CD4-positive, alpha-beta T cell (primary cell): ENCODE measurements at regions of chr5 and their contacts with region 1.

Region 1: DNA sequence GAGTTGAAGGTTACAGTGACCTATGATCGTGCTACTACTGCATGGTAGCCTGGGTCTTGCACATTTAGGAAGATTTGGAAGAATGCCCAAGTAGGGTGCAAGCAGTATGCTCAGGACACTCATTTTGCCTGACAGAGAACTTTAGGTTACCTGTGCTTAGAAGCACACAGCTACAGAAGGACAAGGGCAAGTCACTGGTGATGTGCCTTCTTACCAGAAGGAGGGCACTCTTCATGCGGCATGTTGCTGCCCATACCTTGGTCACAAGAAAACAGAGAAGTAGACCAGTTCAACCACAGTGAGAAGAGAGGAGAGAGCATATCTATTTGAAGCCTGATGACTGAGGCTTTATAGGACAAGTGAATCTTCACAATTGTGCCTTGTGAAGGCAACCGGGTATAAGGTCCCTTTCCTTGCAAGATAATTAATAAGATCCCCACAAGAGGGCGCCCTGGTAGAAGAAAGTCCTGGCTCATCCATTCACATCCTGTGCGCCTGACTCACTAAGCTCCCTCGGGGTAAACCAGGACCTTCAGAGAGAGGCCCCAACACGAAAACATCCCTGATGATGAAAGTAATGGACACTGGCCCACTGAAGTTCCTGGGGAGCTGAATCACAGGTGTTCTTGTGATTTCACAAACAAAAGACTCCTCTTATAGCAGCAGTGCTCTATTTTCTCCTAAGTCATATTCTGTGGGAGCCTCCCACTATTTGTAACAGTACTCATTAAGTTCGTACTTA is 38.1 kb upstream of the STARD4 start:
- DNase-seq: peak; percentile 37 to 83 (median 57)
- ATAC-seq: peak; percentile 90
- H3K4me3 ChIP-seq: no peak overlapping the region
- H3K4me3 Mint-ChIP-seq: no peak overlapping the region
- H3K27ac ChIP-seq: no peak overlapping the region
- H3K27ac Mint-ChIP-seq: no peak overlapping the region
- H3K4me1 ChIP-seq: peaks cover 9% of the 10 kb centered on the region
- H3K4me1 Mint-ChIP-seq: peaks cover 21% of the 10 kb centered on the region
- H3K27me3 ChIP-seq: no peaks in the 10 kb centered on the region
- H3K27me3 Mint-ChIP-seq: peaks cover 3% of the 10 kb centered on the region
- CTCF ChIP-seq: peak; percentile 68

Region 2: GRCh38 chr5:111840036-111840674 is 289.7 kb after region 1 on chr5:
- CTCF ChIA-PET with region 1: no interaction called
- POLR2A ChIA-PET with region 1: no interaction called
- intact Hi-C with region 1: loop called in 1 of 2 experiments (anchors 5 kb)
- DNase-seq: no peak
- ATAC-seq: no peak
- H3K4me3 ChIP-seq: no peak overlapping the region
- H3K4me3 Mint-ChIP-seq: no peak overlapping the region
- H3K27ac ChIP-seq: no peak overlapping the region
- H3K27ac Mint-ChIP-seq: no peak overlapping the region
- H3K4me1 ChIP-seq: no peaks in the 10 kb centered on the region
- H3K4me1 Mint-ChIP-seq: no peaks in the 10 kb centered on the region
- H3K27me3 ChIP-seq: no peaks in the 10 kb centered on the region
- H3K27me3 Mint-ChIP-seq: no peaks in the 10 kb centered on the region
- CTCF ChIP-seq: no peak

Region 3: GRCh38 chr5:111914966-111915636 is 364.7 kb after region 1 on chr5:
- CTCF ChIA-PET with region 1: no interaction called
- POLR2A ChIA-PET with region 1: no interaction called
- intact Hi-C with region 1: no loop called
- DNase-seq: no peak
- ATAC-seq: no peak
- H3K4me3 ChIP-seq: no peak overlapping the region
- H3K4me3 Mint-ChIP-seq: no peak overlapping the region
- H3K27ac ChIP-seq: no peak overlapping the region
- H3K27ac Mint-ChIP-seq: no peak overlapping the region
- H3K4me1 ChIP-seq: no peaks in the 10 kb centered on the region
- H3K4me1 Mint-ChIP-seq: no peaks in the 10 kb centered on the region
- H3K27me3 ChIP-seq: no peaks in the 10 kb centered on the region
- H3K27me3 Mint-ChIP-seq: no peaks in the 10 kb centered on the region
- CTCF ChIP-seq: no peak